IMR-90 (cell line): ENCODE measurements at regions of chr12 and their contacts with region 1.

Region 1: GRCh38 chr12:34218165-34219045 is 196.1 kb downstream of the ALG10 start:
- DNase-seq: peak; percentile 34
- ATAC-seq: peak; percentile 80
- H3K4me3 ChIP-seq: no peak overlapping the region
- H3K27ac ChIP-seq: no peak overlapping the region
- H3K4me1 ChIP-seq: no peaks in the 10 kb centered on the region
- H3K27me3 ChIP-seq: no peaks in the 10 kb centered on the region
- CTCF ChIP-seq: peak; percentile 59
- POLR2A ChIP-seq: no peak
- RAD21 ChIP-seq: peak; percentile 48

Region 2: GRCh38 chr12:34126239-34126641 is 92.2 kb before region 1 on chr12:
- CTCF ChIA-PET with region 1: no interaction called
- POLR2A ChIA-PET with region 1: no interaction called
- dilution Hi-C with region 1: no loop called
- in situ Hi-C with region 1: no loop called
- intact Hi-C with region 1: loop called (anchors 1 kb)
- DNase-seq: no peak
- ATAC-seq: no peak
- H3K4me3 ChIP-seq: no peak overlapping the region
- H3K27ac ChIP-seq: no peak overlapping the region
- H3K4me1 ChIP-seq: no peaks in the 10 kb centered on the region
- H3K27me3 ChIP-seq: no peaks in the 10 kb centered on the region
- CTCF ChIP-seq: no peak
- POLR2A ChIP-seq: no peak
- RAD21 ChIP-seq: no peak